Aorta (tissue), 5 donors: ENCODE measurements at regions of chr19 and their contacts with region 1.

Region 1: GRCh38 chr19:5031231-5032100 is 62.6 kb downstream of the KDM4B start:
- DNase-seq: peak; percentile 86 to 95
- ATAC-seq: peak; percentile 88
- H3K4me3 ChIP-seq: no peak overlapping the region
- H3K27ac ChIP-seq: no peak overlapping the region
- H3K4me1 ChIP-seq: no peaks in the 10 kb centered on the region
- H3K27me3 ChIP-seq: no peaks in the 10 kb centered on the region

Region 2: DNA sequence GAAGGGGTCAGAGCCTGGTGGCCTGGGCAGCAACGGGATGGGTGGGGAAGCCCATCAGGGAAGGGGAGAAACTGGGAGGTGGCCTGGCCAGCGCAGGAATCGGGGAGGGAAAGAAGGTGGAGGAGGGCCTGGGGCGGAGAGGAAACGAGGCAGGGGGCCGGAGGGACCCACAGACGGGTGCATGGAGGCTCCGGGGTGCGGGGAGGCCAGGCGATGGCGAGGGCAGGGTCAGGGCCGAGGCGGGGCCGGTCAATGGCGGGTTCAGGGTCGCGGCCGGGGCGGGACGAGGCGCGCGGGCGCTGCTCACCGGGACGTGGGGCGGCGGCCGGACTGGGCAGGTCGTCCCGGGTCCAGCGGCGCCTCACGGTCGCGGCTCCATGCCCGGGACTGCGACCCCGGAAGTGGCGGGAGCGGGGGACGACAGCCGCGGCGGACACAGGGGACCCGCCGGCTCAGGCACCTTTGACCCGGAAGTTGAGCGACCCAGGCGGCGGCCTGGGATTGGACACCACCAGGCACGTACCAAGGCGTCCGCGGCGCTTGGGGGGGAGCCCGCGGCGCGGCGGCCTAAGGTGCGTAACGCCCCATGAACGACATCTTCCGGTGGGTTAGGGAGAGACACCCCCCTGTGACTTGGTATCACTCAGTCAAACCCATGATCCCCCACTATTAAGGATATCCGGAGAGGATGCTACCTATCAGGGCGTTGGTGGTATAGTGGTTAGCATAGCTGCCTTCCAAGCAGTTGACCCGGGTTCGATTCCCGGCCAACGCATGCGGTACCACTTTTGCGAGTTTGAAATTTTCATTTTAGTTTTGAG is 307.9 kb before region 1 on chr19 and contains the start of gene DPP9:
- intact Hi-C with region 1: loop called in 1 of 2 experiments (anchors 10 kb)
- DNase-seq: peak; percentile 98
- ATAC-seq: peak; percentile 96
- H3K4me3 ChIP-seq: peak within 1 kb of the TSS; percentile 60 to 64
- H3K27ac ChIP-seq: peak within 1 kb of the TSS in 1 of 2 donors; percentile 37
- H3K4me1 ChIP-seq: no peaks in the 10 kb centered on the region
- H3K27me3 ChIP-seq: no peaks in the 10 kb centered on the region
- total RNA-seq, gene DPP9: 46.1 to 56.4 TPM

Region 3: GRCh38 chr19:4811328-4812131 is 219.9 kb before region 1 on chr19:
- intact Hi-C with region 1: loop called (anchors 2 kb)
- DNase-seq: peak; percentile 88 to 96
- ATAC-seq: peak; percentile 74
- H3K4me3 ChIP-seq: no peak overlapping the region
- H3K27ac ChIP-seq: peak overlapping the region in 1 of 2 donors; percentile 74
- H3K4me1 ChIP-seq: peaks cover 0 to 1% of the 10 kb centered on the region in 2 donors
- H3K27me3 ChIP-seq: no peaks in the 10 kb centered on the region

Region 4: GRCh38 chr19:4870025-4870700 is 161.3 kb before region 1 on chr19:
- intact Hi-C with region 1: loop called (anchors 1 to 2 kb)
- DNase-seq: peak; percentile 77 to 87
- ATAC-seq: no peak
- H3K4me3 ChIP-seq: no peak overlapping the region
- H3K27ac ChIP-seq: no peak overlapping the region
- H3K4me1 ChIP-seq: no peaks in the 10 kb centered on the region
- H3K27me3 ChIP-seq: no peaks in the 10 kb centered on the region

Region 5: GRCh38 chr19:4909897-4910593 is 121.4 kb before region 1 on chr19:
- intact Hi-C with region 1: loop called in 1 of 2 experiments (anchors 5 kb)
- DNase-seq: peak; percentile 95 to 97
- ATAC-seq: peak; percentile 91
- H3K4me3 ChIP-seq: peak overlapping the region; percentile 68 to 79
- H3K27ac ChIP-seq: no peak overlapping the region
- H3K4me1 ChIP-seq: no peaks in the 10 kb centered on the region
- H3K27me3 ChIP-seq: no peaks in the 10 kb centered on the region

Region 6: DNA sequence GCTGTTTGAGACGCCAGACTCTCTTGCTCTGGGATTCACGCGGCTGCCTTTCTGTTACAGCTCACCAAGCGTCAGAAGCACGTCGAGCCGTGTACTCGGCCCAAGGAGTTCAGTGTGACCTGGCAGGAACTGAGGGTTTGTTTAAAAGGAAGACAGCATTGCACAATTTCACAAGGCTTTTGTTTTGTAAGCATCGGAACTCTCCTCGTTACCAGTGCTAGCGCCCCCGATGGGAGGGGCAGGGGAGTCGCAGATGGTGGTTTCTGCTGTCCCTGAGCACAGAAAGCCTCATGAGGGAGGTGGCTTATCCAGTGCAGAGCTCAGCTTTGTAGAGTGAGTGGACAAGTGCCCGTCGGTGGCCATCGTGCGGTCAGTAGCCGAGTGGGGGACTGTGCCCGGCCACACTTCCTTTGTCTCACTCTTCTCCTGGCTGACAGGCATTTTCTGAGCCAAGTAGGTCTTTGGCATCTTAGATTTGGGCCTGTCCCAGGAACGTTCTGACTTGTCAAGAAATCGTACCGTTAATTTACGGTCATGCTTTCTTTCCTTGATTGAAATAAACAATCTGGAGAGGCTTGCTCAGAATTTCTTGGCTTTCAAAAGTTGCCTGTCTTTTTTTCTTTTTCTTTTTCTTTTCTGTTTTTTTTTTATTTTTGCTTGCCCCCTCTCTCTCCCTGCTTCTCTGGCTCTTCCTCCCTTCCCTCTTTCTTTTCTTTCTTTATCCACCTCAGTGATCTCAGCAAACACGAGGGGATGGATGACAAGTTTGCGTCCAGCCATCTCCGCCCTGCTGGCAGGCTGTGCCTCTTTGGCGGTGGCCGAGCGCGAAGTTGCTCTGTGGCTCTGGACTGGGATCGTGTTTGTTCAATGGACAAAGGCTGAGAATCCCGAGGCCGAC is 54.8 kb before region 1 on chr19:
- intact Hi-C with region 1: loop called in 1 of 2 experiments (anchors 10 kb)
- DNase-seq: peak; percentile 85 to 88
- ATAC-seq: peak; percentile 89
- H3K4me3 ChIP-seq: no peak overlapping the region
- H3K27ac ChIP-seq: peak overlapping the region in 1 of 2 donors; percentile 22
- H3K4me1 ChIP-seq: no peaks in the 10 kb centered on the region
- H3K27me3 ChIP-seq: no peaks in the 10 kb centered on the region